ENCODE measurements at regions of chr14 and their contacts with region 1.

Region 1: DNA sequence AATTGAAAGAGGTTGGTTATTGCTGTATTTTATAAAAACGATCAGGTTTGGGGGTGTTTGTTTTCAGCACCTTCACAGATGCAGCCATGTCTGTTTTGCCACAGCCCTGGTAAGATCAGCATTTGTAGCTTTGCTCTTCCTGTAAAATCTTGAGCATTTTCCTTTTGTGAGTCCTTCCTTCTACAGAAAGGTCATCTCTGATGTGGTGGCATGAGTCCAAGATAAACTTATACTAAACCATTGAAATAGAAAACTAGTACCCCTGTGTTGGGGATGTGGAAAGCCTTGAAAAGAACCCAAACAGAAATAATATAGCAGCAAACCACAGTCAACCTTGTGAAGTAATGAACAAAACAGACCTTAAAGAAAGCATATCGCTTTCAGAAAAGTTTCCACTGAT is 85.5 kb downstream of the TGFB3 start:
- DNase-seq: no peak
- ATAC-seq: no peak

Region 2: DNA sequence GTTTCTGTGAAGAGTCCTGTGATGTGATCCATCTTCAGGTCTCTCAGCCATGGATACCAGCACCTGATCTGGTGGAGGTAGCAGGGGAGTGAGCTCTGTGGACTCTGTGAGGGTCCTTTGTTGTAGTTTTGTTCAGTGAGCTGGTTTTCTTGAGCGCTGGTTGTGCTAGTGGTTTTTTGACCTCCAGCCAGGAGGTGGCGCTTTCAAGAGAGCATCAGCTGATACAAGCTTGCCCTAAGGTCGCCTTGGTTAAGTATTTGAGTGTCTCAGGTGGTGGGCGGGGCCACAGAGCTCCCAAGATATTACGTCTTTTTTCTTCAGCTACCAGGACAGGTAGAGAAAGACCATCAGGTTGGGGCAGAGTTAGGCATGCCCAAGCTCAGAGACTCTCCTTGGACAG is 95.5 kb before region 1 on chr14:
- intact Hi-C with region 1: loop called (anchors 10 kb)
- DNase-seq: no peak
- ATAC-seq: no peak

Region 3: DNA sequence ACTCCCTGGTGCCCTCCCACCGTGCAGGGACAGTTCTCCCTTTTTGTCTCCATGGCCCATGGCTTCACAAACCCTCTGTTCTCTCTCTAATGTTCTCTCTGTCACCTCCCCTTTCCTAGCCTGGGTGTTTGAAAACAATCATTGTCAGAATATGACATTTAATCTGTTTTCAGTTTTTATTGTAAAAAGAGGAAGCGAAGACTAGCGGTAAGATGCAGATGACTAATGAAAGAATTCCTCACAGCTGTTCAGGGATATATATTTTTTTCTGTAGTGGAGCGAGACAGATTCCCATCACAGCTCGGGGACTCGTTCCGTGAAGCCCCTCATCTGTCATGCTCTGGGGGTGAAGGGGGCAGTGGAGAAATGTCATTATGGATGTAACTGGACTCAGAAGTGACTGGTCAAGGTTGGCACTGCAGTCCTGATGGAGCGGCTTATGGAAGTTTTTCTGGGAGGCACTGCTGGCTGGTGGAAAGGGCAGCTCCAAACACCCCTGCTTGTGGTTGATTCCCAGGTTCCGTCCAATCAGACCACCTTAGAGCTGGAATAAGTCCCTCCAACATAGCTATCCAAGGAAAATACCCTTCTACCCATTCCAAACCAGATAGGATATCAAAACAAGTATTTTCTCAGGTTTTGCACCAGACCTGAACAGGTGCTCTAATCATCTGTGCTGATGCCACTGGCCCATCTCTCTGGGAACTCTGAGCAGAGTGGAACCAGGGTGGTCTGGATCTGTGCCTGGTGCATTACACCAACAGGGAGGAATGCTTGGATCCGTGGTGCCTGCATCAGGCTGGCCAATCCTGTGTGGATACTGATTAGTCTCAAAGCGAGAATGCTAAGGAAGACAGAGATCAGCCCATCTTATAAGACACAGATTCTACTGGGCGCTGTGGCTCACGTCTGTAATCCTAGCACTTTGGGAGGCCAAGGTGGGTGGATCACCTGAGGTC is 340.1 kb after region 1 on chr14:
- intact Hi-C with region 1: no loop called
- DNase-seq: no peak
- ATAC-seq: no peak

Measured in Right ventricle myocardium superior (tissue), 1 donor.